ENCODE measurements at regions of chr7 and their contacts with region 1.

Region 1: GRCh38 chr7:105352018-105352612 is 36.6 kb downstream of the SRPK2 start:
- DNase-seq: peak in 9 of 10 donors; percentile 48 to 75 (median 61)
- H3K4me3 ChIP-seq: peak overlapping the region in 5 of 59 donors; percentile 2 to 18 (median 9)
- H3K27ac ChIP-seq: peak overlapping the region in 50 of 59 donors; percentile 1 to 87 (median 66)
- H3K27me3 ChIP-seq: no peaks in the 10 kb centered on the region
- CTCF ChIP-seq: no peak

Region 2: GRCh38 chr7:105387621-105388372 is 35.7 kb after region 1 on chr7:
- intact Hi-C with region 1: loop called in 1 of 2 experiments (anchors 5 kb)
- DNase-seq: peak in 8 of 10 donors; percentile 39 to 72 (median 58)
- H3K4me3 ChIP-seq: peak overlapping the region; percentile 70 to 95 (median 86)
- H3K27ac ChIP-seq: peak overlapping the region in 29 of 59 donors; percentile 5 to 89 (median 43)
- H3K27me3 ChIP-seq: no peaks in the 10 kb centered on the region
- CTCF ChIP-seq: peak in 28 of 56 donors; percentile 8 to 51 (median 26)